ENCODE measurements at regions of chr10 and their contacts with region 1.

Region 1: DNA sequence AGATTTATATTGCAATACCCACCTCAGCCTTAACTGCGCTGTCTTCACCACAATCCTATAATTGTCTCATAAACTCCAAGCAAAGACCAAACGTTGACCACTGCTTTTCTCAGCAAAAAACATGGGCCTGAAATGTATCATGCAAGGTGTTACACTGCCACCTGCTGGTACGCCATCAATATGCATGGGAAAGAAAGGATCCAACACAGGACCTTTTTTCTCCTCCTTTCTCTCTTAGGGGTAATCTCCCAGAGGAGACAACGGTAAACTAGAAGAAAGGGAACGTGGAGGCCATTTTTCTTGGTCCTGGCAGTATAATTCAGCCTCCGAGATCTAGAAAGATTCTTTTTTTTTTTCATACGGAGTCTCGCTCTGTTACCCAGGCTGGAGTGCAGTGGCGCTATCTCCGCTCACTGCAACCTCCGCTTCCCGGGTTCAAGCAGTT is 79.1 kb upstream of the MPP7 start:
- DNase-seq: peak; percentile 89
- H3K4me3 Mint-ChIP-seq: no peak overlapping the region
- H3K27ac Mint-ChIP-seq: no peak overlapping the region
- H3K4me1 Mint-ChIP-seq: peaks cover 42% of the 10 kb centered on the region
- H3K27me3 Mint-ChIP-seq: peaks cover 9% of the 10 kb centered on the region

Region 2: DNA sequence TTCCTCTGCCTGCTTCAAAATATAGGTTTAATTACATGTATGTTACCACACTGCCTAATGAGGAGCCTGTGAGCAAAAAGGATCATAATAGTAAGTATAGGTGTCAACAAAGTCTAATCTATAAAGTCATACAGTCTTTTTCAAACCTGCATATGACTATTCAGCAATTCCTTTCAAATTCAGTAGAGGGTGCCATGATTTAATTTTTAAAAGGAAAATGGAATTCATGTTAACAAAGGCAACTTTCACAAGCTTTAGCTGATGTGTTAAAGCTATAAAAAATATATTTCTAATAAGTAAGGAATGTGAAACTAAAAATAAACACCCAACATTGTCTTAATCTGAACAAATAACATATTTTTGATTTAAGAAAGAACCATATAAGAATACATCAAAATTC is 131.1 kb before region 1 on chr10:
- CTCF ChIA-PET with region 1: interaction called, 30 read pairs
- POLR2A ChIA-PET with region 1: no interaction called
- DNase-seq: no peak
- H3K4me3 Mint-ChIP-seq: no peak overlapping the region
- H3K27ac Mint-ChIP-seq: no peak overlapping the region
- H3K4me1 Mint-ChIP-seq: peaks cover 21% of the 10 kb centered on the region
- H3K27me3 Mint-ChIP-seq: no peaks in the 10 kb centered on the region

Region 3: GRCh38 chr10:28302638-28303488 is 79.1 kb before region 1 on chr10 and contains the start of gene MPP7:
- CTCF ChIA-PET with region 1: interaction called, 18 read pairs
- POLR2A ChIA-PET with region 1: interaction called, 3 read pairs
- DNase-seq: peak; percentile 95
- H3K4me3 Mint-ChIP-seq: peak within 1 kb of the TSS; percentile 93
- H3K27ac Mint-ChIP-seq: peak within 1 kb of the TSS; percentile 70
- H3K4me1 Mint-ChIP-seq: peaks cover 57% of the 10 kb centered on the region
- H3K27me3 Mint-ChIP-seq: peaks cover 30% of the 10 kb centered on the region
- total RNA-seq, gene MPP7: 18.7 to 20.2 TPM

Region 4: GRCh38 chr10:28334296-28334695 is 47.6 kb before region 1 on chr10:
- CTCF ChIA-PET with region 1: interaction called, 10 read pairs
- POLR2A ChIA-PET with region 1: no interaction called
- DNase-seq: peak; percentile 86
- H3K4me3 Mint-ChIP-seq: peak overlapping the region; percentile 84
- H3K27ac Mint-ChIP-seq: peak overlapping the region; percentile 96
- H3K4me1 Mint-ChIP-seq: peaks cover 74% of the 10 kb centered on the region
- H3K27me3 Mint-ChIP-seq: peaks cover 2% of the 10 kb centered on the region

Region 5: GRCh38 chr10:28393966-28394568 is 12.1 kb after region 1 on chr10:
- CTCF ChIA-PET with region 1: interaction called, 14 read pairs
- POLR2A ChIA-PET with region 1: no interaction called
- DNase-seq: peak; percentile 71
- H3K4me3 Mint-ChIP-seq: no peak overlapping the region
- H3K27ac Mint-ChIP-seq: no peak overlapping the region
- H3K4me1 Mint-ChIP-seq: peaks cover 4% of the 10 kb centered on the region
- H3K27me3 Mint-ChIP-seq: peaks cover 5% of the 10 kb centered on the region

Measured in activated CD4-positive, alpha-beta T cell treated with anti-CD3 and anti-CD28 coated beads, Interleukin-2, amount 10 ng/mL, durations not matched to agents 7 days and 5 days (primary cell).